ENCODE measurements at regions of chr20 and their contacts with region 1.

Region 1: GRCh38 chr20:34069341-34070078 is 42.5 kb downstream of the EIF2S2 start:
- DNase-seq: peak; percentile 70 to 75
- H3K4me3 ChIP-seq: no peak overlapping the region
- H3K27ac ChIP-seq: 0 out of 2 replicates have a peak overlapping the region, but pooled peaks have one; percentile 33
- H3K4me1 ChIP-seq: peaks cover 13% of the 10 kb centered on the region; the same call in 1 of the 2 replicates
- H3K27me3 ChIP-seq: no peaks in the 10 kb centered on the region
- CTCF ChIP-seq: peak; percentile 89

Region 2: GRCh38 chr20:33459599-33459998 is 609.9 kb before region 1 on chr20:
- CTCF ChIA-PET with region 1: no interaction called
- POLR2A ChIA-PET with region 1: no interaction called
- intact Hi-C with region 1: loop called (anchors 5 kb)
- DNase-seq: no peak
- H3K4me3 ChIP-seq: no peak overlapping the region
- H3K27ac ChIP-seq: no peak overlapping the region
- H3K4me1 ChIP-seq: peaks cover 6% of the 10 kb centered on the region; the same call in 1 of the 2 replicates
- H3K27me3 ChIP-seq: no peaks in the 10 kb centered on the region
- CTCF ChIP-seq: no peak

Region 3: DNA sequence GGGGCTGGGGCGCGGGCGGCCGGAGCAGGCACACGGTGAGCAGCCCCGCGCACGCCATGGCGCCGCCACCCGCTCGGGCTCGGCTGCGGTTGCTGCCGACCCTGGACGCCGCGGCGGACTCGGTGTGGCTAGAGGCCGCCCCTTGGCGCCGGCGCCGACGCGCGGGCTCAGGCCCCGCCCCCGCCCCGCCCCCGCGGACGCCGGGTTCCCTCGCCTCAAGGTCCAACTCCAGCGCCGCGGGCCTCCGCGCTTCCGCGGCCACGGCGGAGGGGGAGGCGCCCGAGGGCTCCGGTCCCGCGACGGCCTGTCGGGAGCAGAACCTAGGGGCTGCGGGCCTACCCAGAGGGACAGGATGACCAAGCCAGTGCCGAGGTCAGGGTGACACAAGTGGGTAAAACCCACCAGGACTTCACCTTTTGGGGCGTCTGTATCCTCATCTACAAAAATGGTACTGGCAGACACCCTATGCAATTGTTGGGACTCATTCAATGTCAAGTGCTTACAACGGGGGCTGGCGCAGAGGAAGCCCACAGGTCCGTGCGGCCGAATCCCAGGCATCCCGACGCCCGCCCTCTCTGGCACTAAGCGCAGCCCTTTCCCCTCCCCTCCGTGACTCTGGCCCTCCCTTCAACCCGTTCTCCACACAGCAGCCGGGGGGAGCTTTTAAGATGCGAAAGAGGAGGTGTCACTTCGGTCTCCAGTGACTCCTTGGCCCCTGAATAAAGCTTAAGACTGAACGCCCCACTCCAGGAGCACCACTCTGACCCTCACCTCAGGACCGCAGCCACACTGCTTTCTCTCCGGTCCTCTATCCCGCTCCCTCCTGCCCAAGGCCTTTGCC is 395.0 kb before region 1 on chr20 and contains the start of gene NECAB3:
- CTCF ChIA-PET with region 1: no interaction called
- POLR2A ChIA-PET with region 1: interaction called, 12 read pairs
- intact Hi-C with region 1: loop called (anchors 5 kb)
- DNase-seq: peak in 1 of 2 experiments; percentile 90
- H3K4me3 ChIP-seq: peak within 1 kb of the TSS; percentile 96
- H3K27ac ChIP-seq: peak within 1 kb of the TSS; percentile 48
- H3K4me1 ChIP-seq: peaks cover 16% of the 10 kb centered on the region; the same call in 1 of the 2 replicates
- H3K27me3 ChIP-seq: no peaks in the 10 kb centered on the region
- CTCF ChIP-seq: no peak
- total RNA-seq, gene NECAB3: 72.1 and 77.7 TPM in 2 replicates

Region 4: GRCh38 chr20:33810885-33811777 is 258.4 kb before region 1 on chr20 and contains the start of gene CHMP4B:
- CTCF ChIA-PET with region 1: no interaction called
- POLR2A ChIA-PET with region 1: no interaction called
- intact Hi-C with region 1: loop called (anchors 10 kb)
- DNase-seq: peak; percentile 93 to 99
- H3K4me3 ChIP-seq: peak within 1 kb of the TSS; percentile 84
- H3K27ac ChIP-seq: peak within 1 kb of the TSS; percentile 94
- H3K4me1 ChIP-seq: peaks cover 35% of the 10 kb centered on the region
- H3K27me3 ChIP-seq: no peaks in the 10 kb centered on the region
- CTCF ChIP-seq: no peak
- total RNA-seq, gene CHMP4B: 176 and 180 TPM in 2 replicates

Region 5: DNA sequence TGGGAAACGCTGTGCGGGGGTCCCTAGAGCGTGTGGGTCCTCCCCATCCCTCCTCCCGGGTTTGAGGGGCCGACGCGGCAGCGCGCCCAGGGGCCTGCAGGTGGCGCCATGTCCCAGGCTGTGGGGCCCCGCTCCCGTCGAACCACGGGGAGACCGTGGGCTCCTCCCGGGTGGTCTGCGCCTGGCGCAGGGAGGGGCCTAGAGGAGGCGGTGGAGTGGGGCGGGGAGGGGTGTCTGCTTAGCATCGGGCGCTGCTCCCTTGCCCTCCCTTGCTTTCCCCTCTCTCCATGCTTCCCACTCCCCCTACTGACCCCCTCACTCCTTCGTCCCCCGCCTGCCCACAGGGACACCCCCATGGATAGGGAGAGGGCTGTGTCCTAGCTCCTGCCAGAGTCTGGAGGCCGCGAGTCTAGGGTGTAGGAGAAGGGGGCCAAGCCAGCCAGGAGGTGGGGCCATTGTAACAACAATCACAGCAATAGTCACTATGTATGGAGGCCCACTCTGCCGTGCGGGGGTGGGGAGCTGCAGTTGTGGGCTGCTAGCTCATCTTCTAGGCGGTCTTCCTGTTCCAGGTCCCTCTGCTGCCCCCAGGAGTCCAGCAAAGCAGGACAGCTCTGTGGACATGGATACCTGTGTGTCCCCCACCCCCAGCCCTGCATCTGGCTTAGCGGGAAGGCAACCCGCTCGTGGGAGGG is 206.7 kb before region 1 on chr20:
- CTCF ChIA-PET with region 1: interaction called, 4 read pairs
- POLR2A ChIA-PET with region 1: no interaction called
- intact Hi-C with region 1: loop called (anchors 2 kb)
- DNase-seq: peak in 1 of 2 experiments; percentile 21
- H3K4me3 ChIP-seq: no peak overlapping the region
- H3K27ac ChIP-seq: no peak overlapping the region
- H3K4me1 ChIP-seq: peaks cover 22% of the 10 kb centered on the region
- H3K27me3 ChIP-seq: no peaks in the 10 kb centered on the region
- CTCF ChIP-seq: peak; percentile 58

Region 6: DNA sequence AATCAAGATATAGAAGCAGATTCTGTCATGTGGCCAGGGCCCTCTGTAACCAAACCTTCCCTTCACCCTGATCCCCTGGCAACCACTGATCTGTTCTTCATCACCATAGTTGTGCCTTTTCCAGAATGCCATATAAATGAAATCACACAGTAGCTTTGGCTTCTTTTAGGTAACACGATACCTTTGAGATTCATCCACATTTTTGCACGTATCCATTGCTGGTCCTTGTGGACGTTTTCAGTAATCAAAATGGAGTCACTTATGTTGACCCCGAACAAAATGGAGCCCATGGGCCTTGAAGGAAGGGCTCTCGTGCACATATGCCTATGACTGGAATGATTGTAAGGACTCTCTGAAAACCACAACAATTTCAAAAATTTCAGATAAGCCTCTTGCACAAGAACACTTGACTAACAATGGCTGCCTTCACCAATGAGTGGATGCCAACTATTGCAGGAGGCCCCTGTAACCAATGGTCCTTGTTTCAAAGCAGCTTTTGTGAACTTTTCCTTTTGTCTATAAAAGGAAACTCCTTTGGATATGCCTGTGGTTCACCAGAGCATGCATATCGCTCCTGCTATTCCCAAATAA is 160.1 kb before region 1 on chr20:
- CTCF ChIA-PET with region 1: interaction called, 18 read pairs
- POLR2A ChIA-PET with region 1: no interaction called
- intact Hi-C with region 1: no loop called
- DNase-seq: peak; percentile 68 to 94
- H3K4me3 ChIP-seq: no peak overlapping the region
- H3K27ac ChIP-seq: peak overlapping the region; percentile 56
- H3K4me1 ChIP-seq: peaks cover 35% of the 10 kb centered on the region
- H3K27me3 ChIP-seq: no peaks in the 10 kb centered on the region
- CTCF ChIP-seq: no peak

Region 7: GRCh38 chr20:34001378-34001777 is 68.1 kb before region 1 on chr20:
- CTCF ChIA-PET with region 1: no interaction called
- POLR2A ChIA-PET with region 1: no interaction called
- intact Hi-C with region 1: no loop called
- DNase-seq: no peak
- H3K4me3 ChIP-seq: no peak overlapping the region
- H3K27ac ChIP-seq: no peak overlapping the region
- H3K4me1 ChIP-seq: peaks cover 1% of the 10 kb centered on the region; the same call in 1 of the 2 replicates
- H3K27me3 ChIP-seq: no peaks in the 10 kb centered on the region
- CTCF ChIP-seq: no peak